IMR-90 (cell line): ENCODE measurements at regions of chr5 and their contacts with region 1.

Region 1: GRCh38 chr5:134465816-134466240 is 54.1 kb upstream of the CDKN2AIPNL start:
- DNase-seq: peak; percentile 90
- ATAC-seq: peak; percentile 96
- H3K4me3 ChIP-seq: peak overlapping the region; percentile 32; the same call in 1 of the 2 replicates
- H3K27ac ChIP-seq: peak overlapping the region; percentile 96
- H3K4me1 ChIP-seq: peaks cover 10% of the 10 kb centered on the region
- H3K27me3 ChIP-seq: no peaks in the 10 kb centered on the region
- CTCF ChIP-seq: no peak
- POLR2A ChIP-seq: peak; percentile 30; the same call in 1 of the 2 replicates
- RAD21 ChIP-seq: peak; percentile 29; the same call in 1 of the 2 replicates

Region 2: GRCh38 chr5:134188092-134188491 is 277.7 kb before region 1 on chr5:
- CTCF ChIA-PET with region 1: no interaction called
- POLR2A ChIA-PET with region 1: no interaction called
- dilution Hi-C with region 1: no loop called
- in situ Hi-C with region 1: no loop called
- intact Hi-C with region 1: no loop called
- DNase-seq: no peak
- ATAC-seq: no peak
- H3K4me3 ChIP-seq: no peak overlapping the region
- H3K27ac ChIP-seq: no peak overlapping the region
- H3K4me1 ChIP-seq: no peaks in the 10 kb centered on the region
- H3K27me3 ChIP-seq: no peaks in the 10 kb centered on the region
- CTCF ChIP-seq: no peak
- POLR2A ChIP-seq: no peak
- RAD21 ChIP-seq: no peak

Region 3: DNA sequence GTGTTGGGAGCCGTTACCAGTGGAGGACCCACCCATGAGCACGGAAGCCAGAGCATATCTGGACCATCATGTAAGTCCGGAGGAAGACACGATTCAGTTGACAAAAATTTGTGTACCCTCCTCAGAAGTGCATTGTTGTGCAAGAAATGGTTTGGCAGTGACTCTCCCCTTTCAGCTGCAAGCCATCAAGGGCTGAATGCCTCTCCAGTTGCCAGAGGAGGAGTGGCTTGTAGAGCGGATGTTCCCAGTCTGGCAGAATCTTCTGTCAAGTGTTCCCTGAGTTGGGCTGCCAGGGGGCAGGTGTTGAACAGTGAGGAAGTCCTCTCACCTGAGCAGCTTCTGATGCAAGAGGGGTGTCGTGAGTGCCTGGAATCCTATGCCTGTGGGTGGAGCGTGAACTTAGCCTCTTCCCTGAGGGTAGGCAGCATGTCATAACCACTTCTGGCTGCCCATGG is 26.6 kb before region 1 on chr5:
- CTCF ChIA-PET with region 1: interaction called, 4 read pairs
- POLR2A ChIA-PET with region 1: no interaction called
- dilution Hi-C with region 1: no loop called
- in situ Hi-C with region 1: no loop called
- intact Hi-C with region 1: loop called (anchors 2 kb)
- DNase-seq: peak; percentile 98
- ATAC-seq: peak; percentile 64
- H3K4me3 ChIP-seq: no peak overlapping the region
- H3K27ac ChIP-seq: peak overlapping the region; percentile 88
- H3K4me1 ChIP-seq: peaks cover 31% of the 10 kb centered on the region
- H3K27me3 ChIP-seq: no peaks in the 10 kb centered on the region
- CTCF ChIP-seq: 0 out of 2 replicates have a peak, but pooled peaks have one; percentile 7
- POLR2A ChIP-seq: peak; percentile 26; the same call in 1 of the 2 replicates
- RAD21 ChIP-seq: peak; percentile 35

Region 4: DNA sequence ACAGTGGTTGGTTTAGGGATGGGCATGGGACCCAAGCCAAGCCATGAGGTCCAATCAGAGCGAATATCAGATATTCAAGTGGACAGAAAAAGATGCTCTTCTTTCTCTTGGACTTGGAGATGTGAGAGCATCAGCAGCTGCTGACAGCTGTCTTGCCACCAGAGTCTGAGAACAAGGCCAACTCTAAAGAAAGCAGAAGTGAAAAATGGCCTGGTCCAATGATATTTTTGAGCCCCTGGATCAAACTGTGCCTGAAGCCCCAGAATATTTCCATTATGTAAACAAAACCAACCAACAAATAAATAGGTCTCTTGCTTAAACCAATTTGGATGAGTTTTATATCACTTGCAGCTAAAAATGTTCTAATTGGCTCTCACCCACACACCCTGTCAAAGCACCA is 29.0 kb after region 1 on chr5:
- CTCF ChIA-PET with region 1: no interaction called
- POLR2A ChIA-PET with region 1: no interaction called
- dilution Hi-C with region 1: no loop called
- in situ Hi-C with region 1: no loop called
- intact Hi-C with region 1: loop called (anchors 1 kb)
- DNase-seq: no peak
- ATAC-seq: no peak
- H3K4me3 ChIP-seq: no peak overlapping the region
- H3K27ac ChIP-seq: no peak overlapping the region
- H3K4me1 ChIP-seq: no peaks in the 10 kb centered on the region
- H3K27me3 ChIP-seq: no peaks in the 10 kb centered on the region
- CTCF ChIP-seq: no peak
- POLR2A ChIP-seq: no peak
- RAD21 ChIP-seq: no peak

Region 5: DNA sequence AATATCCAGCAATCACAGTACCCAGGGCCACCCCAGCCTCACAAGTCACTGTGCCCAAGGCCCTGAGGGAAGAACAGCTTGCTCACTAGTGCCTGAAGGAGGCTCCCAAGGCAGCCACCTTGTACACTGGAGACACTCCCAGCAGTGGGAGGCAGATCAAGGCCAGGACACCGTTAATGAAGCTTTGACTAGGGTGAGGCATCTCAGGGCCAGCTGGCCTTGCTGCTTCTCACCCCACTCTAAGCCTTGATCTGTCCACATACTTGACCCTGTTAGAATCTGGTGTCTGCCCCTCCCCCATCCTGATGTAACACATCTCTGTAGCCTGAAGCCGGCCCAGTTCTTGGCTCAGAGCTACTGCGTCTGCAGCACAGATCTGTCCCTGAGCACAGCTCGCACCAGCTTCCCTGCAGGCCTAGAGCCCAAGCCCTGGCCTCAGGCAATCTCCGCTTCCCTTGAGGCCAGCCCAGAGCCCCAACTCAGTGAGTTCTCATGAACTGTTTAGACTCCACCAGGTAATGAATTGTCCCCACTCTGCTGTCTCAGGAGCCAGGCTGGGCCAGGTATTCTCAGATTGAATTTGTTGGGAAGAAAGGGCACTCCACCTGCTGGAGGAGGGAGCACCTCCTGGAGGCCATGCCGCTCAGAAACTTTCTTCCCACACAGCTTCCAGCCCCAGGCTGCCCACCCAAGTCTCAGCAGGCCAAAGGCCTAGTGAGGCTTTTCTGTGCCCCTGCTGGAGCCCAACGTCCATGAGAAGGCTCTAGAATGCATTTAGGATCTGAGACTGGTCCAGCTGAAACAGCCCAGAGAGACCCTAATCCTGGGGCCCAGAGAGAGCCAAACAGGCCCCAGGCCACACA is 46.2 kb after region 1 on chr5:
- CTCF ChIA-PET with region 1: interaction called, 6 read pairs
- POLR2A ChIA-PET with region 1: no interaction called
- dilution Hi-C with region 1: no loop called
- in situ Hi-C with region 1: no loop called
- intact Hi-C with region 1: loop called (anchors 2 kb)
- DNase-seq: peak; percentile 63
- ATAC-seq: peak; percentile 81
- H3K4me3 ChIP-seq: no peak overlapping the region
- H3K27ac ChIP-seq: peak overlapping the region; percentile 16; the same call in 1 of the 2 replicates
- H3K4me1 ChIP-seq: peaks cover 27% of the 10 kb centered on the region
- H3K27me3 ChIP-seq: no peaks in the 10 kb centered on the region
- CTCF ChIP-seq: no peak
- POLR2A ChIP-seq: no peak
- RAD21 ChIP-seq: no peak